Calu3 (cell line): ENCODE measurements at regions of chr13 and their contacts with region 1.

Region 1: DNA sequence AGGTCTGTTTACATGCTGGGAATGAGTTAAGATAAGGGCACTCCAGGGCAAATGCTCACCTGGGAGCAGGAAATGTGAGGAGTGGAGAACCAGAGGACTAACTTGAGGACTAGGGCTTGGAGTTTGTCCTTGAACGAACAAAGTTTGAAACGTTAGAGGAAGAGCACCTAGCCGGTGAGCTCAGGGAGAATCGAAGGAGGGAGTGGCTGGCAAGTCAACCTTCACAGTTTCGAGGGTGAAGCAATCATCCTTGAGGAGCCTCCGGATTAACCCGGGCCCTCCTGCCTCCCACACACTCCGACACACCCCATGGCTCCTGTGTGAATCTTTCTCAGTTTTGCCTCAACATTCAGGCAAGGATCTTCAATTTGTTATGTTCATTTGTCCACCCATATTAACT is 58.6 kb downstream of the LMO7 start:
- DNase-seq: no peak
- H3K4me3 Mint-ChIP-seq: peak overlapping the region; percentile 13
- H3K27ac Mint-ChIP-seq: no peak overlapping the region
- H3K4me1 Mint-ChIP-seq: peaks cover 32% of the 10 kb centered on the region
- H3K27me3 Mint-ChIP-seq: no peaks in the 10 kb centered on the region
- CTCF ChIP-seq: no peak

Region 2: DNA sequence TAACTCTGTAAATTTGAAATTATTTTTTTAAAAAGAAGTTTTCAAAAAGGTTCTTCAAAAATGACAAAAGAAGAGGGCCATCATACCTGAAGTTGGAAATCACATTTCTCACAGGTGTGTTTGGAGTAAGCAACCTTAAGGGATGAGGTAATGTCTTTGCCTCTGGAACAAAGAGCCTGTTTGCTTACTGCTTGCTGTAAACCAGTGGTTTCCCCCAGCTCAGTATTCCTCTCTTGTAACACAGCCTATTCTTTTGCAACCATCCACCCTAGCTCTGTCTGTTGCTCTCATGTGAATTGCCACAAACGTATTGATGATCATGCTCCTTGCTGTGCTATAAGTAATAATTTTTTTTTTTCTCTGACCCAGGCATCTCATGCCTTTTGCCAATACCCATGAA is 107.0 kb before region 1 on chr13:
- CTCF ChIA-PET with region 1: no interaction called
- intact Hi-C with region 1: no loop called
- DNase-seq: no peak
- H3K4me3 Mint-ChIP-seq: no peak overlapping the region
- H3K27ac Mint-ChIP-seq: no peak overlapping the region
- H3K4me1 Mint-ChIP-seq: no peaks in the 10 kb centered on the region
- H3K27me3 Mint-ChIP-seq: no peaks in the 10 kb centered on the region
- CTCF ChIP-seq: no peak

Region 3: GRCh38 chr13:75637181-75637750 is 57.5 kb before region 1 on chr13:
- CTCF ChIA-PET with region 1: no interaction called
- intact Hi-C with region 1: no loop called
- DNase-seq: no peak
- H3K4me3 Mint-ChIP-seq: peak overlapping the region; percentile 57
- H3K27ac Mint-ChIP-seq: no peak overlapping the region
- H3K4me1 Mint-ChIP-seq: no peaks in the 10 kb centered on the region
- H3K27me3 Mint-ChIP-seq: no peaks in the 10 kb centered on the region
- CTCF ChIP-seq: no peak

Region 4: GRCh38 chr13:75771818-75772217 is 77.1 kb after region 1 on chr13:
- CTCF ChIA-PET with region 1: no interaction called
- intact Hi-C with region 1: no loop called
- DNase-seq: no peak
- H3K4me3 Mint-ChIP-seq: no peak overlapping the region
- H3K27ac Mint-ChIP-seq: peak overlapping the region; percentile 85
- H3K4me1 Mint-ChIP-seq: peaks cover 18% of the 10 kb centered on the region
- H3K27me3 Mint-ChIP-seq: no peaks in the 10 kb centered on the region
- CTCF ChIP-seq: no peak

Region 5: DNA sequence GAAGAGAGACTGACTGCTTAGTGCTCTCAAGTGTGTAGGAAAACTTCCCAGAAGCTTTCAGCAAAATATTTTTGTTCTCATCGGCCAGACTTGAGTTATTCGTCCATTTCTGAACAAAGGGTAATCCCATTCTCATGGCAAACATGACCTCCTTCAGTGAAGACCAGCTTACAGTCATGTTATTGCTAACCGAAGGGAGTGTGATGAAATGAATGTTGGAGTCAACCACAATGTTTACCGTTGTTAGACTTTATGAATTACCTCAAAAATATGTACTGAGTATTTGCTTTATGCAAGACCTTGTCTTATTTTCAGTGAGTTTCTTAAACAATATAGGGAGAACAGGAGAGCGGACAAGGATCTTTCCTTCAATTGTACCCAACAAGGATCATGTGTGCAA is 170.0 kb after region 1 on chr13:
- CTCF ChIA-PET with region 1: interaction called, 3 read pairs
- intact Hi-C with region 1: loop called (anchors 5 kb)
- DNase-seq: no peak
- H3K4me3 Mint-ChIP-seq: no peak overlapping the region
- H3K27ac Mint-ChIP-seq: no peak overlapping the region
- H3K4me1 Mint-ChIP-seq: peaks cover 12% of the 10 kb centered on the region
- H3K27me3 Mint-ChIP-seq: no peaks in the 10 kb centered on the region
- CTCF ChIP-seq: no peak